ENCODE measurements at regions of chr17 and their contacts with region 1.

Region 1: DNA sequence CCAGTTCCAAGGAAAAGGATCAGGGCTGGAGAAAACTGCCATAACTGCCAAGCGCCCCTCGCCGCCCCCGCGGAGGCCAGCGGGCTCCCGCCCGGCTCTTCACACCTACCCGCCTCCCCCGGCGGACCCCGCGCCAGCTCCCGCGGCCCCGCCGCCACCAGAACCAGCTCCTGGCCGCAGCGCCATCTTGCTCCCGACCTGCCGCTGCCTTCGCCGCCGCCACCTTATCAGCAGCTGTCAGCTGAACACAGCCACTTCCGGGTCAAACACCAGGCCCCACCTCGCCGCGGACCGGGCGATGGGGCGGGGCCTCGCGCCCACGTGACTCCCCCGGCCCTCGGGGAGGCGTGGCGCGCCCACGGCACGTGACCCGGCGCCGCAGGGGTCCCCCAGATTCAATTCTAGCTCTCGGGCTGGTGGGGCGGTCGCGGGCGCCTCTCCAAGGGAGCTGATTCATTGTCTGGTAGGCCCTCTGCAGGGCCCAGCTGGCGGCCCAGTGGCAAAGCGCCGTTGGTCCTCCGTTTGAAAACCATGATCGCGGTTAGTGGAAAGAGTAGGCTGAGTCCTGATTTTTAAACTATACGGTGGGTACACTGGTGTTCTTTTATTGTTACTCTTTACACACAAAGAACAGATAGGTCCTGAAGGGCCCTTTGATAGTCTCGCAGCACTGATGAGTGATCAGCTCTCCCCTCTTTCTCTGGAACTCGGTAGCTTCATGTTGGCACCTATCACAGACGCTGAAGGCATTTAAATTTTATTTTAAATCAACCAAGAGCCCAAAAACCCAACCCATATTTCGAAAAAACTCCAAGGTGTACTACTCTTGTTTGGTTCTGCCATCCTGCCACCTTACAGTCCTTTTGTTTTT is at the start of gene SYNRG:
- DNase-seq: peak; percentile 92
- H3K4me3 Mint-ChIP-seq: peak within 1 kb of the TSS; percentile 74
- H3K27ac Mint-ChIP-seq: peak within 1 kb of the TSS; percentile 88
- H3K4me1 Mint-ChIP-seq: peaks cover 35% of the 10 kb centered on the region
- H3K27me3 Mint-ChIP-seq: no peaks in the 10 kb centered on the region
- total RNA-seq, gene SYNRG: 51.3 and 51.4 TPM in 2 replicates

Region 2: GRCh38 chr17:36545465-36546417 is 1063.7 kb before region 1 on chr17:
- intact Hi-C with region 1: loop called (anchors 5 kb)
- DNase-seq: peak; percentile 95
- H3K4me3 Mint-ChIP-seq: peak overlapping the region; percentile 87
- H3K27ac Mint-ChIP-seq: peak overlapping the region; percentile 92
- H3K4me1 Mint-ChIP-seq: peaks cover 36% of the 10 kb centered on the region
- H3K27me3 Mint-ChIP-seq: no peaks in the 10 kb centered on the region

Region 3: DNA sequence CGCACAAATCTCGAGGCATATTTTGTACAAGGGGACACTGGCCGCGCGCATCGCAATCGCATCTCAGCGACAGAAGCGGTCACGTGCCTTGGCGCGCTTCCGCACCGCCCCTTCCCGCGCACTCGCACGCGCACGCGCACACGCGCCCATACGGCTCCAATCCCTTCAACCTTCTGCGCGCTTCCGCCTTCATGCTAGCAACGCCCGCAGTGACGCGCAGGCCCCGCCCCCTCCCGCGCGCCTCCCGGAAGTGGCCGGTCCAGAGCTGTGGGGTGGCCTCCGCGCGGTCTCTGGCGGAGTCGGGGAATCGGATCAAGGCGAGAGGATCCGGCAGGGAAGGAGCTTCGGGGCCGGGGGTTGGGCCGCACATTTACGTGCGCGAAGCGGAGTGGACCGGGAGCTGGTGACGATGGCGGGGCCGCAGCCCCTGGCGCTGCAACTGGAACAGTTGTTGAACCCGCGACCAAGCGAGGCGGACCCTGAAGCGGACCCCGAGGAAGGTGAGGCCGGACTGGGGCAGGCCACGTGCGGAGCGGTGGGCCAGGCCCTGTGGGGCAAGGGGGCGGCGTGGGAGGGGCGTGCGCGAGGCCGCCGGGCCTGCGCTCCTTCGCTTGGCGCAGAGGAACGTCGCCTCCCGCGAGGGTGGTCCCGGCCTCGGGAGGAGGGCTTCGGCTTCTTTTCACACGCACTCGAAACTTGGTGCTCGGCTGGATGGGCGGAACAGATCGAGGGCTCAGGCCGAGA is 660.5 kb before region 1 on chr17 and contains the start of gene AATF:
- intact Hi-C with region 1: loop called (anchors 5 kb)
- DNase-seq: peak; percentile 98
- H3K4me3 Mint-ChIP-seq: peak within 1 kb of the TSS; percentile 97
- H3K27ac Mint-ChIP-seq: peak within 1 kb of the TSS; percentile 94
- H3K4me1 Mint-ChIP-seq: peaks cover 55% of the 10 kb centered on the region
- H3K27me3 Mint-ChIP-seq: peaks cover 40% of the 10 kb centered on the region
- total RNA-seq, gene AATF: 110 and 119 TPM in 2 replicates

Region 4: GRCh38 chr17:37406635-37407461 is 202.6 kb before region 1 on chr17 and contains the starts of genes ACACA and TADA2A:
- intact Hi-C with region 1: loop called (anchors 5 kb)
- DNase-seq: peak; percentile 75
- H3K4me3 Mint-ChIP-seq: peak within 1 kb of the TSS; percentile 99
- H3K27ac Mint-ChIP-seq: peak within 1 kb of the TSS; percentile 98
- H3K4me1 Mint-ChIP-seq: peaks cover 51% of the 10 kb centered on the region
- H3K27me3 Mint-ChIP-seq: no peaks in the 10 kb centered on the region
- total RNA-seq, gene ACACA: 110 and 122 TPM in 2 replicates
- total RNA-seq, gene TADA2A: 39.7 and 41.9 TPM in 2 replicates

Region 5: GRCh38 chr17:37505333-37505732 is 104.1 kb before region 1 on chr17:
- intact Hi-C with region 1: no loop called
- DNase-seq: no peak
- H3K4me3 Mint-ChIP-seq: no peak overlapping the region
- H3K27ac Mint-ChIP-seq: no peak overlapping the region
- H3K4me1 Mint-ChIP-seq: peaks cover 5% of the 10 kb centered on the region
- H3K27me3 Mint-ChIP-seq: no peaks in the 10 kb centered on the region

Region 6: DNA sequence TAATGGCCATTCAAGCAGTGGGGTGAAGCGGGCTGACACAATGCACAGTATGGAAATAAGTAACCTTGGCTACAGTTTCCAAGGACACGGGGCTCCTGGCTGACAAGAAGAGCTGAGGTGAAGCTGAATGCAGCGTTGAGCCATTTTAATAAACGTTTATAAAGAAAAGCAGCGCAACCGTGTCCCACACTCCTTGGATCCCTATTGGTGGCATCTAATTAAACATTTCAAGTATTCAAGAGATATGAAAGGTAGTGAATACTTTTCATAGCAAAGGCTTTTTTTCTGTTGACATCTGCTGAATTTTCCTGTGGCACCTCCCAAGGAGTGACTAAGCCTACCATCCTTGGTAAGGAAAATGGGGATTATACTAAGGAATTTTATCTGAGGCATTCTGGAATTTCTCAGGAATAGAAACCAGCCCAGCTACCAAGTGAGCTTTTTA is 93.3 kb before region 1 on chr17:
- intact Hi-C with region 1: no loop called
- DNase-seq: no peak
- H3K4me3 Mint-ChIP-seq: no peak overlapping the region
- H3K27ac Mint-ChIP-seq: no peak overlapping the region
- H3K4me1 Mint-ChIP-seq: peaks cover 10% of the 10 kb centered on the region
- H3K27me3 Mint-ChIP-seq: no peaks in the 10 kb centered on the region

Region 7: DNA sequence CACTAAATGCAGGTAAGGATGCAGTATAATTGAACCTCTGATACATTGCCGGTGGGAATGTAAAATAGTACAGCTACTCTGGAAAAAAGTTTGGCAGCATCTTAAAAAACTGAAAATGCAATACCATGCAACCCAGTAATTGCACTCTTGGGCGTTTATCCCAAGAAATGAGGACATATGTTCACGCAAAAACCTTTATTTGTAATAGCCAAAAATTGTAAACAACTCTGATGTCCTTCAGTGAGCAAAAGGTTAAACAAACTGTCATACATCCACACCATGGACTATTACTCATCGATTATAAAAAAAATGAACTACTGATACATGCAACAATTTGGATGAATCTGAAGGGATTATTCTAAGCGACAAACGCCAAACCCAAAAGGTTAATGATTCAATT is 17.1 kb before region 1 on chr17:
- intact Hi-C with region 1: loop called (anchors 2 kb)
- DNase-seq: no peak
- H3K4me3 Mint-ChIP-seq: no peak overlapping the region
- H3K27ac Mint-ChIP-seq: no peak overlapping the region
- H3K4me1 Mint-ChIP-seq: peaks cover 29% of the 10 kb centered on the region
- H3K27me3 Mint-ChIP-seq: no peaks in the 10 kb centered on the region

Region 8: GRCh38 chr17:37744961-37745800 is 135.8 kb after region 1 on chr17 and contains the start of gene HNF1B:
- intact Hi-C with region 1: no loop called
- DNase-seq: no peak
- H3K4me3 Mint-ChIP-seq: peak within 1 kb of the TSS; percentile 84
- H3K27ac Mint-ChIP-seq: peak within 1 kb of the TSS; percentile 66
- H3K4me1 Mint-ChIP-seq: peaks cover 33% of the 10 kb centered on the region
- H3K27me3 Mint-ChIP-seq: peaks cover 68% of the 10 kb centered on the region
- total RNA-seq, gene HNF1B: 3.2 and 3.6 TPM in 2 replicates

Region 9: DNA sequence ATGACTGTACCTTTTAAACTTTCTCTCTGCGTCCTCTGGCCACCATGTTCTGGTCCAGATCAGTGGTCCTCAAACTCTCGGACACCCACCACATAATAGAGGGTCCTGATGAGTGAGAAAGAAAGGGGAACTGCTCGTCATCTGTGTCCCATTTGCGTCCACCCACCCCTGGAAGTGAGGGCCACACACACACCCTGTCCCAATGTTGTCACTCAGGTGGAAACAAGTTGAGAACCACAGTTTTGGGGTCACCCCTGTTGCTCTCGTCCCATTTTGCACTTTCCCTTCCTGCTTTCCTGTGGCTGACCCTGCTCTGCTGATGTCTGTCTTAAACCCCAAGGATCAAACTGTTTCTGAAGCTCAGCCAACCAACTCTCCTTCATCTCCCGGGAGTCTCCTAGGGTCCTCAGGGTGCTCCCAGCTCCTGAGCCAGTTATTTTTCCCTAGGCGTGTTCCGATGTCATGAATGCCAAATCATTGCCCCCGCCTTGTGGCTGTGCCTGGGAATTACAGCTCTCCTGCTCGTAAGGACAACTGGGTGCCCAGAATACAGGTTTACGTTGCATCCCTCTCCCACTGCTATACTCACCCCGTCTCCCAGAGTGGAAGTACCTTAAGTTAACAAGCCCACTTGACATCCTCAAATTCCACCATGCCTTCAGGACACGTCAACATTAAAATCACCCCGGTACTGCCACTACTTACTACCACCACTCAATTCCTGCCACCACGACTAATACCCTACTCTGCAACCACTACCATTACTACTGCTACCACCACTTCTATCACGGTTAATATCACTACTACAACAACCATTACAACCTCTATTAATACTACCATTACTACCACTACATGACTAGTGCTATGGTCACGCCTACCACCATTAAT is 161.5 kb after region 1 on chr17:
- intact Hi-C with region 1: loop called (anchors 5 kb)
- DNase-seq: peak; percentile 14
- H3K4me3 Mint-ChIP-seq: no peak overlapping the region
- H3K27ac Mint-ChIP-seq: no peak overlapping the region
- H3K4me1 Mint-ChIP-seq: peaks cover 56% of the 10 kb centered on the region
- H3K27me3 Mint-ChIP-seq: peaks cover 20% of the 10 kb centered on the region

Region 10: GRCh38 chr17:38702166-38702899 is 1092.9 kb after region 1 on chr17:
- intact Hi-C with region 1: loop called (anchors 5 kb)
- DNase-seq: peak; percentile 75
- H3K4me3 Mint-ChIP-seq: peak overlapping the region; percentile 97
- H3K27ac Mint-ChIP-seq: peak overlapping the region; percentile 99
- H3K4me1 Mint-ChIP-seq: peaks cover 65% of the 10 kb centered on the region
- H3K27me3 Mint-ChIP-seq: no peaks in the 10 kb centered on the region